ENCODE measurements at regions of chr11 and their contacts with region 1.

Region 1: GRCh38 chr11:95254131-95254704 is 23.2 kb upstream of the SESN3 start:
- DNase-seq: peak; percentile 93
- ATAC-seq: peak; percentile 95
- H3K4me3 ChIP-seq: peak overlapping the region; percentile 8 to 59 (median 34)
- H3K4me3 Mint-ChIP-seq: peak overlapping the region; percentile 86
- H3K27ac ChIP-seq: peak overlapping the region; percentile 90 to 93
- H3K27ac Mint-ChIP-seq: peak overlapping the region; percentile 97
- H3K4me1 ChIP-seq: peaks cover 60 to 76% of the 10 kb centered on the region in 2 donors
- H3K4me1 Mint-ChIP-seq: peaks cover 80% of the 10 kb centered on the region
- H3K27me3 ChIP-seq: no peaks in the 10 kb centered on the region
- H3K27me3 Mint-ChIP-seq: no peaks in the 10 kb centered on the region
- CTCF ChIP-seq: no peak

Region 2: GRCh38 chr11:95337175-95337957 is 83.1 kb after region 1 on chr11:
- CTCF ChIA-PET with region 1: interaction called, 4 read pairs
- POLR2A ChIA-PET with region 1: no interaction called
- intact Hi-C with region 1: loop called (anchors 2 kb)
- DNase-seq: peak; percentile 80
- ATAC-seq: peak; percentile 58
- H3K4me3 ChIP-seq: peak overlapping the region in 4 of 5 experiments; percentile 5 to 51 (median 38)
- H3K4me3 Mint-ChIP-seq: no peak overlapping the region
- H3K27ac ChIP-seq: peak overlapping the region; percentile 67 to 83
- H3K27ac Mint-ChIP-seq: no peak overlapping the region
- H3K4me1 ChIP-seq: peaks cover 21 to 32% of the 10 kb centered on the region in 2 donors
- H3K4me1 Mint-ChIP-seq: peaks cover 5% of the 10 kb centered on the region
- H3K27me3 ChIP-seq: no peaks in the 10 kb centered on the region
- H3K27me3 Mint-ChIP-seq: no peaks in the 10 kb centered on the region
- CTCF ChIP-seq: no peak